Activated B cell treated with CpG ODN at 0.5 μM for 24 hours (primary cell): ENCODE measurements at regions of chr17 and their contacts with region 1.

Region 1: DNA sequence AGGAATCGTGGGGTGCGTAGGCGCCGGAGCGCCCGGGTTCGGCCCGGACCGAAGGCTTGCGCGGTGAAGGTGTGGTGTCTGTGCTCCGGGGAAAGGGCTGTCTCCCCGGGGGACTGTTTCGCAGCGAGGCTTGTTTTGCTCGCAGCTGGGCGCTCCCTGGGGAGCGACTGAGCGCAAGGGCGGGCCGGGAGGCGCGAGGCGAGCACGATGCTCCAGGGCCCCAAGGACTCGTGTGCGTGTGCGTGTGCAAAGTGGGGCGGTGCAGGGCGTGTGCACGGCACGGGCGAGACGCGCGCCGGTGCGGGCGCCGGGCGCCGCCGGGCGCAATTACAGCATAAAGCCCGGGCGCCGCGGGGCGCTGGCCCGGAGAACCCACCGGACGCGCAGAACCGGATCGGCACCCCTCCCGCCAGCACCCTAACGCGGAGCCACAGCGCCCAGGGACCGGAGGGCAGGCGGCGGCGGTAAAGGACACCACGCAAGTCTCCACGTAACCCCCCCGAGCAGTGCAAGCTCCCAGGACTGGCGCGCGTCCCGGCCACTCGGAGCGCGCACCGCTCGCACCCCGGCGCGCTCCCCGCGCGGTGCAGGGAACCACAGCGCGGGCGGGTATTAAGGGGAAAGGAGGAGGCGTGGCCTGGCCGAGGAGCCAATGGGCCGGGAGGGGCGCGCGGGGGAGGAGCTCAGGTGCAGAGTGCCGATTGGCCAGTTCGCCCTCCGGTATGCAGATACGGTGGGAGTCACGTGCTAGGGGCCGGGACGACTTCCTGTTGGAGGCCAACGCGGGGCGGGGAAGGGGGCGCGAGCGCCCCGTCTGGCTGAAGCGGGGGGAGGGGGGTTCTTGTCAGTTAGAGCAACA is at the start of gene TNRC6C:
- DNase-seq: peak; percentile 98
- ATAC-seq: peak; percentile 85
- H3K4me3 Mint-ChIP-seq: peak within 1 kb of the TSS; percentile 89
- H3K27ac Mint-ChIP-seq: peak within 1 kb of the TSS; percentile 96
- H3K4me1 Mint-ChIP-seq: peaks cover 41% of the 10 kb centered on the region
- H3K27me3 Mint-ChIP-seq: peaks cover 15% of the 10 kb centered on the region
- CTCF ChIP-seq: no peak
- total RNA-seq, gene TNRC6C: 14.4 and 24.6 TPM in 2 replicates

Region 2: GRCh38 chr17:77331301-77331864 is 626.7 kb before region 1 on chr17:
- CTCF ChIA-PET with region 1: no interaction called
- POLR2A ChIA-PET with region 1: interaction called, 13 read pairs
- intact Hi-C with region 1: no loop called
- DNase-seq: peak; percentile 90
- ATAC-seq: peak; percentile 91
- H3K4me3 Mint-ChIP-seq: peak overlapping the region; percentile 76
- H3K27ac Mint-ChIP-seq: peak overlapping the region; percentile 78
- H3K4me1 Mint-ChIP-seq: peaks cover 57% of the 10 kb centered on the region
- H3K27me3 Mint-ChIP-seq: no peaks in the 10 kb centered on the region
- CTCF ChIP-seq: peak; percentile 32

Region 3: DNA sequence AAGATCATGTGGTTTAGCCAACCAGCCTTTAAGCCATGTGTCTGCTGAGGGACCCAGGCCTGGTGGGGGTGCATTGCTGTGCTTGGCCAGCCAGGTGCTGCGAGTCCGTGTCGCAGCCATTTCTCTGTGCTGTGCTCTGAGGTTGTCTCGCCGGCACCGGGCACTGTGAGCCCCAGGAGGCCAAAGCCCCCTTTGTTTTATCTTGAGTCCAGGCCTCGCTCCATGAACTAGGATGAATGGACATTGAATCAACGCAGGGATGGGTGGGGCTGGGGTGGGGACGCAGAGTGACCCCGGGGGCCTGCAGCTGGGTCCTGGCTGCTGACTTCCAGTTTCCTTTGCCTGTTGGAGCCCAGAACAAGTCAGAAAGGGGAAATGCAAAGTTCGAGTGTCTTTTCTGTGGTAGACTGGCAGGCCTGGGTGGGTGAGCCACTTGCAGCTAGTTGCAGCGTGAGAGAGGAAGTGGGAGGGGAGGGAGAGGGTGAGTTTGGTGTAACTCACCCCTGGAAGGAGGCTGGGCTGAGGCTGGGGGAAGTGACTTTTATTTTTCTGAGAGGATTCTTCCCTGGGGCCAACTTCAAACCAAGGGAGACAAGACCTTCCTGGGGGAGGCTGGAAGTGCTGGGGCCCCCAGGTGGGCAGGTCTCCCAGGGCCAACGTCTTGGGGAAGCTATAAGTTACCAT is 492.6 kb before region 1 on chr17:
- CTCF ChIA-PET with region 1: no interaction called
- POLR2A ChIA-PET with region 1: interaction called, 10 read pairs
- intact Hi-C with region 1: no loop called
- DNase-seq: peak; percentile 62
- ATAC-seq: peak; percentile 81
- H3K4me3 Mint-ChIP-seq: peak overlapping the region; percentile 75
- H3K27ac Mint-ChIP-seq: peak overlapping the region; percentile 93
- H3K4me1 Mint-ChIP-seq: peaks cover 94% of the 10 kb centered on the region
- H3K27me3 Mint-ChIP-seq: no peaks in the 10 kb centered on the region
- CTCF ChIP-seq: no peak

Region 4: GRCh38 chr17:77488531-77489238 is 469.4 kb before region 1 on chr17:
- CTCF ChIA-PET with region 1: no interaction called
- POLR2A ChIA-PET with region 1: no interaction called
- intact Hi-C with region 1: no loop called
- DNase-seq: no peak
- ATAC-seq: no peak
- H3K4me3 Mint-ChIP-seq: no peak overlapping the region
- H3K27ac Mint-ChIP-seq: no peak overlapping the region
- H3K4me1 Mint-ChIP-seq: peaks cover 26% of the 10 kb centered on the region
- H3K27me3 Mint-ChIP-seq: no peaks in the 10 kb centered on the region
- CTCF ChIP-seq: no peak

Region 5: GRCh38 chr17:77696721-77697460 is 261.2 kb before region 1 on chr17:
- CTCF ChIA-PET with region 1: no interaction called
- POLR2A ChIA-PET with region 1: no interaction called
- intact Hi-C with region 1: no loop called
- DNase-seq: no peak
- ATAC-seq: no peak
- H3K4me3 Mint-ChIP-seq: no peak overlapping the region
- H3K27ac Mint-ChIP-seq: no peak overlapping the region
- H3K4me1 Mint-ChIP-seq: no peaks in the 10 kb centered on the region
- H3K27me3 Mint-ChIP-seq: peaks cover 44% of the 10 kb centered on the region
- CTCF ChIP-seq: no peak

Region 6: DNA sequence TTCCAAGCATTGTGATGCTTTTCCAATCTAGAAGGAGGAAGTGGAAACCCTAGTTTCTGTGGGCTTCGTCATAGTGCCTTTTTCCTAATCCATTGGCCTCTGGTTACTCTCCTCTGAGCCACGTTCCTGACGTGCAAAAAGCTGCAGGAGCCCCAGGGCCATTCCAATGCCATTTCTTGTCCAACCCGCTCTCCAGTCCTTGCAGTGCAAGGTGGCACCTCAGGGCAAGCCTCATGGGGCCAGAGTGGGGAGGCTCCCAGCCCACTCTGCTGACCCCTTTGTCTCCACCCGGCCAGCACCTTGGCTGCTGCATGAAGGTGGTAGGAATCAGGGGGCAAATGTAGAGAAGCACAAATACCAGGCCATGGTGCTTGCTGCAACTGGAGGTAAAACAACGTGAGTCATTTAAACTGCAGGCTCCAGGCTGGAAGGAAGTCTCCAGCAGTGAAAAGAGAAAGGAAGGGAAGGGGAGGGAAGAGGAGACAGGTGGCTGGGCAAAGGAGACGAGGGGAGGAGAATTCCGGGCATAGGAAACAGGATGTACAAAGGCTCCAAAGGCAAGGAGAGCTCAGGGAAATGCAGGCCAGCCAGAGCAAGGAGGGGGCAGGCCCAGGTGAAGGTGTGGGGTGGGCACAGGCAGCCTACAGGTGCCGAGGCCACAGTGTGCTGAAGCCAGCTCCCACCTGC is 167.8 kb before region 1 on chr17:
- CTCF ChIA-PET with region 1: no interaction called
- POLR2A ChIA-PET with region 1: no interaction called
- intact Hi-C with region 1: no loop called
- DNase-seq: no peak
- ATAC-seq: no peak
- H3K4me3 Mint-ChIP-seq: no peak overlapping the region
- H3K27ac Mint-ChIP-seq: no peak overlapping the region
- H3K4me1 Mint-ChIP-seq: no peaks in the 10 kb centered on the region
- H3K27me3 Mint-ChIP-seq: peaks cover 42% of the 10 kb centered on the region
- CTCF ChIP-seq: no peak

Region 7: GRCh38 chr17:77842528-77843147 is 115.4 kb before region 1 on chr17:
- CTCF ChIA-PET with region 1: no interaction called
- POLR2A ChIA-PET with region 1: interaction called, 27 read pairs
- intact Hi-C with region 1: no loop called
- DNase-seq: no peak
- ATAC-seq: no peak
- H3K4me3 Mint-ChIP-seq: peak overlapping the region; percentile 24
- H3K27ac Mint-ChIP-seq: no peak overlapping the region
- H3K4me1 Mint-ChIP-seq: peaks cover 54% of the 10 kb centered on the region
- H3K27me3 Mint-ChIP-seq: peaks cover 61% of the 10 kb centered on the region
- CTCF ChIP-seq: no peak

Region 8: DNA sequence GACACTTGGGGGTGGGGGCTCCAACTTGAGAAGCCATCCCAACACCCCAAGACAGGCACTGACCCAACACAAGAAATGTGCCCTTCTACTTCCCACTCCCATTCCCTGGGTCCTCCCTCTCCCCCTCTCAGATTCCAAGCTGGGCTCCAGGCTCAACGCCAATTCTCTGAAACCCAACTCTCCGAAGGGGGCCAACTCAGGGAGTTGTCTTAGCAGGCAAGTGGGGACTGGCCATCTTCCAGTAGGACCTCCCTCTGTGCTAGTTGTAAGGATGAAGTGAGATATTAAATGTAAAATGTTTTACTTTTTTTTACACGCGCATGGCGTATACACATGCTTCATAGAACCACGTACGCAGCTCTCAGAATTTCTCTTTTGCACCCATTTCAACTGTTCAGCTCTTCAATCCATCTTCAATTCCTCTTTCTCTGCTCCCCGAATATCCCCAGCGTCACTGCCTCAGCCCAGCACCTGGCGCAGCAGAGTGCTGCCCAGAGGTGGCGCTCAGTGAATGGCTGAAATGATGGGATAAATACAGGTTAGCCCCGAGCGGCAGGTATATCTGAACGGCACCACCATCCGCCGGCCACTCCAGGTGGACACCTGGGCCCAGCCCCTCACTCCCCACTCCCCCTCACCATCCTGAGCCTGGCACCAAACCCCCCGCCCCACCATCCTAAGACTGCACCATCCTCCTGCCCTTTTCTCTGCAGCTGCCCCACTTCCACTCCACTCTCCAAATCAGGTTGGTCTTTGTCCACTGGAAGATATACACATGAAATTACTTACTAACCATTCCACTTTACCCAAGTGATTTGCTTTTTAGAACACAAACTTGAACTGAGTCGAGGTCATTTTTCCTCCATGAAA is 43.5 kb before region 1 on chr17:
- CTCF ChIA-PET with region 1: interaction called, 4 read pairs
- POLR2A ChIA-PET with region 1: interaction called, 87 read pairs
- intact Hi-C with region 1: loop called (anchors 1 kb)
- DNase-seq: no peak
- ATAC-seq: no peak
- H3K4me3 Mint-ChIP-seq: no peak overlapping the region
- H3K27ac Mint-ChIP-seq: no peak overlapping the region
- H3K4me1 Mint-ChIP-seq: peaks cover 24% of the 10 kb centered on the region
- H3K27me3 Mint-ChIP-seq: peaks cover 59% of the 10 kb centered on the region
- CTCF ChIP-seq: no peak

Region 9: DNA sequence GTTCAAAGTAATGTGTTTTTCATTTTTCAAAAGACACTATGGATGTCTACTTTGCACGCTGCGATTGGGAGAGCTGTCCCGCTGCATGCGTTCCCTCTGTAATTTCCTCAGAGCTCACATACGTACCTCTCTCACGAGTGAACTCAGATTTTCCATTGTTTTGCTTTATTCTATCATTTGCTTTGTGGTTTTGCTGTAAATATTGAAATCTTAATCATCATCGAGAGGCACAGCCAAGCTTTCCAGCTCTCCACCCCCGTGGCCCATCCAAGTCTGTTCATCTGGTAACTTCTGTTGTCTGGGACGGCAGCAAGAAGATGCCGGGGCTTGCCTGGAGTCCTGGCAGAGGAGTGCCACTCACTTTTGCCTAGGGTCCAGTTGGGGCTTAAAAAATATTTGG is 149.4 kb after region 1 on chr17:
- CTCF ChIA-PET with region 1: no interaction called
- POLR2A ChIA-PET with region 1: no interaction called
- intact Hi-C with region 1: no loop called
- DNase-seq: no peak
- ATAC-seq: no peak
- H3K4me3 Mint-ChIP-seq: no peak overlapping the region
- H3K27ac Mint-ChIP-seq: no peak overlapping the region
- H3K4me1 Mint-ChIP-seq: peaks cover 2% of the 10 kb centered on the region
- H3K27me3 Mint-ChIP-seq: no peaks in the 10 kb centered on the region
- CTCF ChIP-seq: no peak

Region 10: GRCh38 chr17:78818932-78819331 is 860.8 kb after region 1 on chr17:
- CTCF ChIA-PET with region 1: no interaction called
- POLR2A ChIA-PET with region 1: interaction called, 10 read pairs
- intact Hi-C with region 1: no loop called
- DNase-seq: no peak
- ATAC-seq: no peak
- H3K4me3 Mint-ChIP-seq: no peak overlapping the region
- H3K27ac Mint-ChIP-seq: peak overlapping the region; percentile 41
- H3K4me1 Mint-ChIP-seq: peaks cover 13% of the 10 kb centered on the region
- H3K27me3 Mint-ChIP-seq: no peaks in the 10 kb centered on the region
- CTCF ChIP-seq: no peak